ENCODE measurements at regions of chr7 and their contacts with region 1.

Region 1: DNA sequence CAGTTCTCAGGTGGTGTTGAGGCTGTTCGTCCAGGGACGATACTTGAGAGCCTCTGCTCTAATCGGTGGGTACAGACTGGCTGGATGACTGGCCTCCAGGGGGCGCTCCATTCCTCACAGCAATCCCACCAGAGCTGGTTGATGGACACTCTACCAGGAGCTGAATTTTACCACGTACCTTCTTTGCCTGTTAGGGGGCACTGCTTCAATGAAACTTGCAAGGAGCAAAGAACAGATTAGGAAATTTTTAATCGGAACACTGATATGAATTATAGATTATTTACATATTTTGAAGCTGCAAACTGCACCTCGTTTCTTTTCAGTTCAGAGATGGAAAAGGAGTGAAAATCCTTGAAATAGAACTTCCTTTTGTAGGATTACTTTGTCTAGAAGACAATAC is 44.9 kb downstream of the KBTBD2 start:
- DNase-seq: peak; percentile 51
- ATAC-seq: peak; percentile 100
- H3K4me3 ChIP-seq: no peak overlapping the region
- H3K27ac ChIP-seq: no peak overlapping the region
- H3K4me1 ChIP-seq: no peaks in the 10 kb centered on the region; the same call in 1 of the 2 replicates
- H3K27me3 ChIP-seq: no peaks in the 10 kb centered on the region
- CTCF ChIP-seq: peak; percentile 77 to 84 (median 81)
- EP300 ChIP-seq: no peak
- POLR2A ChIP-seq: no peak
- RAD21 ChIP-seq: peak; percentile 55

Region 2: GRCh38 chr7:32518534-32519140 is 328.1 kb before region 1 on chr7:
- CTCF ChIA-PET with region 1: no interaction called
- POLR2A ChIA-PET with region 1: no interaction called
- RAD21 ChIA-PET with region 1: no interaction called
- SMC1A ChIA-PET with region 1: no interaction called
- in situ Hi-C with region 1: no loop called
- intact Hi-C with region 1: no loop called
- DNase-seq: no peak
- ATAC-seq: no peak
- H3K4me3 ChIP-seq: no peak overlapping the region
- H3K27ac ChIP-seq: no peak overlapping the region
- H3K4me1 ChIP-seq: peaks cover 11% of the 10 kb centered on the region
- H3K27me3 ChIP-seq: no peaks in the 10 kb centered on the region
- CTCF ChIP-seq: no peak
- EP300 ChIP-seq: no peak
- POLR2A ChIP-seq: no peak
- RAD21 ChIP-seq: no peak

Region 3: GRCh38 chr7:32779167-32779566 is 67.5 kb before region 1 on chr7:
- CTCF ChIA-PET with region 1: no interaction called
- POLR2A ChIA-PET with region 1: no interaction called
- RAD21 ChIA-PET with region 1: no interaction called
- SMC1A ChIA-PET with region 1: no interaction called
- in situ Hi-C with region 1: no loop called
- intact Hi-C with region 1: no loop called
- DNase-seq: no peak
- ATAC-seq: no peak
- H3K4me3 ChIP-seq: no peak overlapping the region
- H3K27ac ChIP-seq: no peak overlapping the region
- H3K4me1 ChIP-seq: no peaks in the 10 kb centered on the region
- H3K27me3 ChIP-seq: no peaks in the 10 kb centered on the region
- CTCF ChIP-seq: no peak
- EP300 ChIP-seq: no peak
- POLR2A ChIP-seq: no peak
- RAD21 ChIP-seq: no peak

Region 4: GRCh38 chr7:32858648-32859047 is 11.9 kb after region 1 on chr7:
- CTCF ChIA-PET with region 1: interaction called, 25 read pairs
- POLR2A ChIA-PET with region 1: no interaction called
- RAD21 ChIA-PET with region 1: no interaction called
- SMC1A ChIA-PET with region 1: interaction called, 3 read pairs
- in situ Hi-C with region 1: no loop called
- intact Hi-C with region 1: no loop called
- DNase-seq: no peak
- ATAC-seq: no peak
- H3K4me3 ChIP-seq: no peak overlapping the region
- H3K27ac ChIP-seq: no peak overlapping the region
- H3K4me1 ChIP-seq: no peaks in the 10 kb centered on the region
- H3K27me3 ChIP-seq: no peaks in the 10 kb centered on the region
- CTCF ChIP-seq: no peak
- EP300 ChIP-seq: no peak
- POLR2A ChIP-seq: no peak
- RAD21 ChIP-seq: no peak

Region 5: DNA sequence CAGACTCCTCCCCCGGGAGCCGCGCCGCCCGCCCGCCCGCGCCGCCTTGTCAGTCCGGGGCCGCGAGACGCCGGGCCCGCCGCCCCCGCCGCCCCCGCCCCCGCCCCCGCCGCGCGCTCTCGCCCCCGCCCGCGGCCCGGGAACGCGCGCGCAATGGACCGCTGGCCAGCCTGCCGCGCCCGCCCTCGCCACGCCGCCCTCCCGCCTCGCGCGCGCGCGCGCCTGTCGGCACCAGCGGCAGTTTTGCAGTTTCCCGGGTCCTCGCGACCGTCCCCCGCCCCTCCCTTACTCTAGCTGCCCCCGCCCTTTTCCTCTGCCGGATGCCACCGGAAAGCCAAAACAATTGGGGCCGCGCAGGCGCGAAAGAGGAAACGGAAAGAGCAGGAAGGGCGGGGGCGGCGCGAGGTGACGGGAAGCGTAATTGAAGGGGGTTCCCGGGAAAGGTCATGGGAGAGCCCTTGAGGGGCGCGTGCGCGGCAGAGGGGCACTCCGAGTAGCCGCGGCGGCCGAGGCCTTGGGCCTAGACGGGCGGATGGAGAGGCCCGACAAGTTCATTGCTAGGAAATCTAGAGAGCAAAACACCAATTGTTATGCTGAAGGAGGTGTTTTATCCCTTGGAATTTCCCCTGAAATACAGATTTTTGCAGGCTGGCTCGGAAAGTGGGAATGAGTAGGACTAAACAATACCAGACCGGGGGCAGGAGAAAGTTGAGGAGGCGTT is 45.3 kb after region 1 on chr7:
- CTCF ChIA-PET with region 1: interaction called, 30 read pairs
- POLR2A ChIA-PET with region 1: interaction called, 3 read pairs
- RAD21 ChIA-PET with region 1: interaction called, 5 read pairs
- SMC1A ChIA-PET with region 1: interaction called, 8 read pairs
- in situ Hi-C with region 1: no loop called
- intact Hi-C with region 1: loop called (anchors 2 kb)
- DNase-seq: peak; percentile 84
- ATAC-seq: peak; percentile 82
- H3K4me3 ChIP-seq: peak overlapping the region; percentile 62
- H3K27ac ChIP-seq: peak overlapping the region; percentile 99
- H3K4me1 ChIP-seq: peaks cover 10% of the 10 kb centered on the region; the same call in 1 of the 2 replicates
- H3K27me3 ChIP-seq: no peaks in the 10 kb centered on the region
- CTCF ChIP-seq: no peak
- EP300 ChIP-seq: no peak
- POLR2A ChIP-seq: peak; percentile 47
- RAD21 ChIP-seq: no peak

Region 6: DNA sequence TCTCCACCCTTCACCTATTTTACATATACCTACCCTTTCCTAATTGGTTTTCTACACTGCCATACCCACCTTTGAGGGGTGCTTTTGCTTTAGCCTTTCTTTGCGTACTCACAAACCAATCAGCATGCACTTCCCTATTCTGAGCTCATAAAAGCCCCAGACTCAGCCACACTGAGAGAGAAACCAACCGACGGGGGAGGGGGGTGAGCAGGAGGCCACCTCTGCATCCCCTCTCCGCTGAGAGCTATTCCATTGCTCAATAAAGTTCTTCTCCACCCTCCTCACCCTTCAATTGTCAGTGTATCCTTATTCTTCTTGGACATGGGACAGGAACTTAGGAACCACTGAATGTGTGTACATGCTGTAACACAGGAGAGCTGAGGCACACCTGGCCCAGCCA is 101.5 kb after region 1 on chr7:
- CTCF ChIA-PET with region 1: interaction called, 14 read pairs
- POLR2A ChIA-PET with region 1: no interaction called
- RAD21 ChIA-PET with region 1: interaction called, 34 read pairs
- SMC1A ChIA-PET with region 1: interaction called, 19 read pairs
- in situ Hi-C with region 1: no loop called
- intact Hi-C with region 1: loop called (anchors 2 kb)
- DNase-seq: no peak
- ATAC-seq: no peak
- H3K4me3 ChIP-seq: no peak overlapping the region
- H3K27ac ChIP-seq: no peak overlapping the region
- H3K4me1 ChIP-seq: no peaks in the 10 kb centered on the region; the same call in 1 of the 2 replicates
- H3K27me3 ChIP-seq: no peaks in the 10 kb centered on the region
- CTCF ChIP-seq: no peak
- EP300 ChIP-seq: no peak
- POLR2A ChIP-seq: no peak
- RAD21 ChIP-seq: no peak

Region 7: GRCh38 chr7:33050535-33051318 is 204.0 kb after region 1 on chr7:
- CTCF ChIA-PET with region 1: interaction called, 30 read pairs
- POLR2A ChIA-PET with region 1: no interaction called
- RAD21 ChIA-PET with region 1: interaction called, 8 read pairs
- SMC1A ChIA-PET with region 1: interaction called, 15 read pairs
- in situ Hi-C with region 1: no loop called
- intact Hi-C with region 1: loop called (anchors 1 kb)
- DNase-seq: no peak
- ATAC-seq: peak; percentile 67
- H3K4me3 ChIP-seq: peak overlapping the region; percentile 25; the same call in 1 of the 2 replicates
- H3K27ac ChIP-seq: peak overlapping the region; percentile 56; the same call in 1 of the 2 replicates
- H3K4me1 ChIP-seq: peaks cover 21% of the 10 kb centered on the region
- H3K27me3 ChIP-seq: no peaks in the 10 kb centered on the region
- CTCF ChIP-seq: peak; percentile 50 to 62 (median 58)
- EP300 ChIP-seq: no peak
- POLR2A ChIP-seq: no peak
- RAD21 ChIP-seq: peak; percentile 69

Region 8: GRCh38 chr7:33487998-33488682 is 641.4 kb after region 1 on chr7:
- CTCF ChIA-PET with region 1: no interaction called
- POLR2A ChIA-PET with region 1: no interaction called
- RAD21 ChIA-PET with region 1: no interaction called
- SMC1A ChIA-PET with region 1: no interaction called
- in situ Hi-C with region 1: no loop called
- intact Hi-C with region 1: no loop called
- DNase-seq: no peak
- ATAC-seq: peak; percentile 92
- H3K4me3 ChIP-seq: no peak overlapping the region
- H3K27ac ChIP-seq: no peak overlapping the region
- H3K4me1 ChIP-seq: peaks cover 6% of the 10 kb centered on the region; the same call in 1 of the 2 replicates
- H3K27me3 ChIP-seq: no peaks in the 10 kb centered on the region
- CTCF ChIP-seq: no peak
- EP300 ChIP-seq: peak in 1 of 2 experiments; percentile 55; a peak in 1 of 4 replicates
- POLR2A ChIP-seq: no peak
- RAD21 ChIP-seq: no peak